Activated T-helper 2 cell treated with anti-CD3 and anti-CD28 coated beads, Interferon-gamma antibody, Interleukin-2, Interleukin-4, amounts not matched to agents 10 μg/mL and 5 μg/mL and 100 μg/mL, durations not matched to agents 14 hours and 24 hours and 36 hours (primary cell): ENCODE measurements at regions of chr1 and their contacts with region 1.

Region 1: DNA sequence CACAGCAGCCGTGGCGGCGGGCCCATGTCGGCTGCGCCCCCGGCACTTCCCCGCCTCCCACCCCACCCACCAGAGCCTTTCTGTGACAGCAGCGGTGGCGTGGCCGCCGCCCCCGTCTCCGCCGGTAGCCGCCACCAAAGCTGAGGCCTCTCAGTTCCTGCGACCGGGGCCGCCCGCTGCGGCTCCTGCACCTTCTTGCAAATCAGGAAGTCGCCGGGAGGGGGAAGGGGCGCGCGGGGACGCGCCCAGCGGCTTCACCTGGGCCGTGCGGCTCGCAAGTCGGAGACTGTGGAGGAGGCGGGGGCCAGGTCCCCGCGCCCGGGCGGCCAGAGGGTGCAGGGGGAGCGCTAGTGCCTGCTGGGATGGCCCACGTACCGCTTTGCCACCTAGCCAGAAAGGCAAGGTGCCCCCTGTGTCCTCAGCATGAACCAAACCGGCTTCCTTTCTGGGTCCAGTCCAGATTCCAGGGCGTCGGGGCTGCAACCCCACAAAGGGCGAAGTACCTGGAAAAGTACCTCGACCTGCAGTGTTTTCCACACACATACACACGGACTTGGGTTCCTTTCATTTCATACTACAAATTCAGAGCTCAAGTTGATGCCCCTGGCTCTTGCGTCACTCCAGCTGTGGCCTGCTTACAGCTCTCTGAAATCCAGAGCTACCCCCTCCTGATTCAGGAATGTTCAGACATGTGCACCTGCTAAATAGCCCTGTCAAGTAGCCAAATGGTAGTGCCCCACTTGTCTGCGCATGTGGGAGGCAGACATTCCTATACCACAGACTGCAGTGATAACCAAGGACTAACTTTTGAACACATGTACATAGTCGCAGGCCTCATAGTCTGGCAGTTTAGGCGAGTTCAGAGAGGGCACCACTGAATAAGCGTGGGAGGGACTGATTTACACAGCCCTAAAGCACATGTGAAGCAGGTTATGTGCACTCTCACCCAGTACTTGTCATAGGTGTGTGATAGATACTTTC is at the start of gene DENND1B:
- DNase-seq: peak; percentile 83
- H3K4me3 Mint-ChIP-seq: peak within 1 kb of the TSS; percentile 89
- H3K27ac Mint-ChIP-seq: peak within 1 kb of the TSS; percentile 99
- H3K4me1 Mint-ChIP-seq: peaks cover 62% of the 10 kb centered on the region
- H3K27me3 Mint-ChIP-seq: no peaks in the 10 kb centered on the region
- total RNA-seq, gene DENND1B: 18.2 and 19.0 TPM in 2 replicates

Region 2: DNA sequence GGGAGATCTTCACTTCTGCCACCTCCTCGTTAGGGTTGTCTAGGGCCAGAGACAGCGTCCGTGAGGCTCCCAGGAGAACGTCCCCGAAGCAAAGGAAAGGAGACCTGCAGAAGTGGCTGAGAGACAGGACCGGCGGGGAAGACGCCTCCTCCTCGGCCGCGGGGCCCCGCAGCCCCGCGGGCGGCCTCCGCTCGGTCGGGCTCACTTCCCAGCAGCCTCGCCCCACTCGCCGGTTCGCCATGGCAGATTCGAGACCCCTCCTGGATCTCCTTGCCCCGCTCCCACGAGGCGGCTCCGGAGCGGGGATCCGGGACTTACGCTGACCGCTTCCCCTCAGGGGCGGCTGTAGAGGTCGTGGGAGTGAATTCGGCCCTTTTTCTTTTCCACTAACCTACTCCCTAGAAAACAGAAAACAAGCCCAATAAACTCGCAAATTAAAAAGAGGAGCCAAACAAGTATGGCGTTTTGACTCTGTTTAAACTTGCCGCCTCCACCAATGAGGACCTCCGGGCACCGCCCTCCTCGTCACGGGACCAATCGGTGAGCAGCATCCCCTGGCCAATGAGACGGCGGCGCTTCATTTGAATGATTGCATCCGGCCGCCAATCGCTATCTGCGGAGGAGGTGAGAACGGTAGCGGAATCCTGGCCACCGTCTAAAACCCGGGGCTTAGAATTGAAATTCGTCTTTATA is 629.2 kb before region 1 on chr1 and contains the start of gene ASPM:
- intact Hi-C with region 1: loop called (anchors 5 kb)
- DNase-seq: peak; percentile 94
- H3K4me3 Mint-ChIP-seq: peak within 1 kb of the TSS; percentile 89
- H3K27ac Mint-ChIP-seq: peak within 1 kb of the TSS; percentile 97
- H3K4me1 Mint-ChIP-seq: peaks cover 31% of the 10 kb centered on the region
- H3K27me3 Mint-ChIP-seq: no peaks in the 10 kb centered on the region
- total RNA-seq, gene ASPM: 43.0 and 43.6 TPM in 2 replicates

Region 3: DNA sequence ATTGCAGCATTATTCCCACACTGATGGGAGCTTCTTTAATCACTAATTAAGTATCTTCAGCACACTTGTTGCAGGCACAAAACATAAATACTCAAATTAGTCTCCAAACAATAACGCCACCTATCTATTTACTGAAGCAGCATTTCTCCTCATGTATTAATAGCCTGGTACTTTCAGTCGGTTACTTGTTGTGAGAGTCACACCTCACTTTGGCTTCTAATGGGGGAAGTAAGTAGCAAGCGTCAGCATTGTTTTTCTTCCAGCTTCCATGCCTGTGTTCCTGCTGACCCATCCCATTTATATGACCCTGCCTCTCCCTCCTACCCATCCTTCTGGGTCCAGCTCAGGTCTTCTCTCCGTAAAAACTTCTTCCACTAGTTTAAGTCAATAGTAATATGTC is 31.6 kb after region 1 on chr1:
- intact Hi-C with region 1: loop called (anchors 1 kb)
- DNase-seq: no peak
- H3K4me3 Mint-ChIP-seq: no peak overlapping the region
- H3K27ac Mint-ChIP-seq: no peak overlapping the region
- H3K4me1 Mint-ChIP-seq: peaks cover 18% of the 10 kb centered on the region
- H3K27me3 Mint-ChIP-seq: peaks cover 6% of the 10 kb centered on the region

Region 4: GRCh38 chr1:197915862-197916499 is 140.4 kb after region 1 on chr1:
- intact Hi-C with region 1: loop called (anchors 5 kb)
- DNase-seq: no peak
- H3K4me3 Mint-ChIP-seq: peak overlapping the region; percentile 79
- H3K27ac Mint-ChIP-seq: no peak overlapping the region
- H3K4me1 Mint-ChIP-seq: peaks cover 74% of the 10 kb centered on the region
- H3K27me3 Mint-ChIP-seq: peaks cover 98% of the 10 kb centered on the region

Region 5: DNA sequence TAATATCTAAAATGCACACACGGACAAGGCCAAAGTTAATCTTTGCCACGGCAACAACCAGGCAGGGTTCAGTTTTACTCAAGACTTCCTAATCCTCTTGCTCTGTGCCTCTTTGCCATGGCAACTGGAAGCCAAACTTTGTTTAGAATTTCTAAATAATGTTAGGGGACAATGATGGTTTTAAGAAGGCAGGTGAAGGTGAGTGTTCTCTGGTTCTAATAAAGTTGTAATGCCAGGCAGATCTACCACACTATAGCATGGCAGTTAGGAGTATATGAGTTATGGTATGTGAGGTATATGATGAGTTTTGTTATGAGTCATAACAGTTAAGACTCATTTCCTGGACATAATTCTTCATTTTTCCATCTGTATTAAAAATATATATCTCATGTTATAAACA is 865.9 kb after region 1 on chr1:
- intact Hi-C with region 1: loop called (anchors 10 kb)
- DNase-seq: no peak
- H3K4me3 Mint-ChIP-seq: peak overlapping the region; percentile 87
- H3K27ac Mint-ChIP-seq: peak overlapping the region; percentile 91
- H3K4me1 Mint-ChIP-seq: peaks cover 50% of the 10 kb centered on the region
- H3K27me3 Mint-ChIP-seq: no peaks in the 10 kb centered on the region